ENCODE measurements at regions of chr9 and their contacts with region 1.

Region 1: DNA sequence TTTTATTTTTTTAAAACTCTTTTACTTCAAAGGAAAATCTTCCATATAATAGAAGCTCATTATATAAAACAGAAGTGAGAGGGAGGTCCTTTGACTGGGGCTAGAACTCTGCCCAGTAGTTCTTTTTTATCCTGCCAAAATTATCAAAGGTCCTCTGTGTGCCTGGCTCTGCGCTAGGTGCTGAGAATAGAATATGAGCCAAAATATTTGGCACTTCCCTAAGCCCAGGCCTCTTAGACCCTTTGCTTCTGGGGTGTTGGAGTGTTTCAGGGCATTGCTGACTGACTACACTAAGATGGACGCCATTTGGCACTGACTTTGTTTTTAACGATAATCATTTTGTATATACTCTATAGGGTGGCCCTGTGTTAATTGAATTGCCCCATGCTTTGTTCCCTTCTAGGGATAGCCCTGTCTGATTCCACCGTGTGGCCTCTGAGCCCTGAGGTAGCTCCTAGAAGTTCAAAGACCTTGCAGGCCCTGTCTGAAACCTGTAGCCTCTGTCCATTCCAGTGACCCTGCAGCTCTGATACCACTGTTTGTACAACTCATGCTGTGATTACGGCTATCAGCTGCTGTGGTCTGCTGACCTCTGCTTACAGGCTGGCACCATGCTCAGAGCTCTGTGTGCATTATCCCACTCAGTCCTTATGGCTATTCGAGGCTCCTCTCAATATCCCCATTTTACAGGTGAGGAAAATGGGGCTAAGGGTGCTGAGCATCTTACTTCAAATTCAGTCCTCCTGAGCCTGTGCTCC is 84.3 kb upstream of the SHB start:
- DNase-seq: no peak
- H3K4me3 ChIP-seq: no peak overlapping the region
- H3K27me3 ChIP-seq: peaks cover 19% of the 10 kb centered on the region
- CTCF ChIP-seq: no peak

Region 2: GRCh38 chr9:37903647-37904444 is 249.5 kb before region 1 on chr9 and contains the start of gene SLC25A51:
- CTCF ChIA-PET with region 1: no interaction called
- POLR2A ChIA-PET with region 1: interaction called, 12 read pairs
- DNase-seq: peak; percentile 44
- H3K4me3 ChIP-seq: peak within 1 kb of the TSS; percentile 84
- H3K27me3 ChIP-seq: no peaks in the 10 kb centered on the region
- CTCF ChIP-seq: peak; percentile 98
- polyA plus RNA-seq, gene SLC25A51: 15.6 and 24.4 TPM in 2 replicates

Measured in BJ (cell line).